Posterior cingulate gyrus (tissue), 11 donors: ENCODE measurements at regions of chr6 and their contacts with region 1.

Region 1: DNA sequence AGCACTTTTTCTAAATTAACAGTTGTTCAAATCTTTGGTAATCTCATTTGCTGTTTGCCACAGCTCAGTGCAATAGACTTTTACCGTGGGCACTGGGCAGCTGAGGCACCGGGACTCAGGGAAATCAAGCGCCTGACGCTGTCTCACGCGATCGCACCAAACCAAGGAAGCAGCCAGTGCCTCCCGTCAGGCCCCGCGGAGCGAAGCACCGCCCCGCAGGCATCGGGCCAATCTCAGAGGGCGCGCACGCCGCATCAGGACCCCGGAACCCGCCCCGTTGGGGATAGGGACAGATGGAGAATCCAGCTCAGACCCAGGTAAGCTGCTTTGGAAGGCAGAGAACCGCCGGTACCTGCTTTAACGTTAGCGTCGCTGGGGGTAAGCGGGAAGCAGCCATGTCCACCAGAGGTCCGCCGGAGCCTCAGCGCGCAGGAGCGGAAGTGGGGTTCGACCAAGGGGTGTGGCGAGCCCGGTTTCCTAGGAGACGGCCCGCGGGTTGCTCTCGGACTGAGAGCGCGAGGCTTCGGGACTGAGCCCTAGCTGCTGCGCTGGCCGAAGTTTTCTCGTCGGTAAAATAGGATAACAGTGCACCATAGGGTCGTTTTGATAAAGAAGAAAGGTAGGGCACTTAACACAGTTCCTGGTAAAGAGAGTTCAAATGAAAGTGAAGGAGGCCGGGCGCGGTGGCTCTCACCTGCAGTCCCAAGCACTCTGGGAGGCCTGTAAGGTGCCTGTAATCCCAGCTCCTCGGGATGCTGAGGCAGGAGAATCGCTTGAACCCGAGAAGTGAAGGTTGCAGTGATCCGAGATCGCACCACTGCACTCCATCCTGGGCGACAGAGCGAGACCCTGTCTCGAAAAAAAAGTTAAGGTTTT is at the start of gene LYRM2:
- DNase-seq: peak; percentile 92 to 99 (median 96)

Region 2: DNA sequence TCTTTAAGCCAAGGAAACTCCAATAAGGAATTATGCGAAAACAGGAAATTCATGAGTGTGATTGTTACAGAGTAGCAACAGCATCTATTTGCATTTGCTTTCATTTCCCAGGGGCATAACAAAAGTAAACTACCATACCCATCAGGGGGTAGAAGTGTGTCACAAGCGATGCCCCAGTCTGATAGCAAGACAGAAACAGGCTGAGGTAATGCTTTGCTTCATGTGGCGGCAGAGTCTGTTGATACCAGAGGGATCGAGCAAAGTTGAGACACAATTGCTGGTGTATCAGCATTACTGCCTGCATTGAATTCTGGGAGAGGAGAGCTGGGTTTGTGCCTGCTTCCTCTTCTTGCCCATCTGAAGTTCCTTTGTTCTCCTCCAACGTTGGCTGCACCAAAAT is 51.2 kb after region 1 on chr6:
- intact Hi-C with region 1: loop called (anchors 5 kb)
- DNase-seq: peak in 6 of 10 donors; percentile 36 to 89 (median 60)